ENCODE measurements at regions of chr17 and their contacts with region 1.

Region 1: GRCh38 chr17:81094509-81095382 is 59.8 kb downstream of the BAIAP2 start:
- DNase-seq: peak; percentile 63
- ATAC-seq: peak; percentile 19 to 63

Region 2: GRCh38 chr17:80931936-80932265 is 162.8 kb before region 1 on chr17:
- intact Hi-C with region 1: no loop called
- DNase-seq: no peak
- ATAC-seq: peak in 1 of 2 donors; percentile 81

Region 3: DNA sequence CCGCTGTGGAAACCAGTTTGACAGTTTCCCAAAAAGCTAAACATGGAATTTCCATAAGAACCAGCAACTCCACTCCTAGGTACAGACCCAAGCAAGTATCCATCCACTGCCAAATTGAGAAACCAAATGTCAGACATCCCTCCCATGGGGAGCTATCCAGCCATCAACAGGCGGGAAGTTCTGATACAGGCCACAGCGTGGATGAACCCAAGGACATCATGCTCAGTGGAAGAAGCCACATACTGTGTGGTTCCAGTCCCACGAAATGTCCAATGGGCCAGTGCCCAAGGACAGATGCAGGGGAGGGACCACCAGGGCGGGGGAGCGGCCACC is 72.4 kb before region 1 on chr17:
- intact Hi-C with region 1: loop called in 1 of 2 experiments (anchors 2 kb)
- DNase-seq: no peak
- ATAC-seq: no peak